ENCODE measurements at regions of chr18 and their contacts with region 1.

Region 1: GRCh38 chr18:67901573-67901972 is 385.1 kb upstream of the DSEL start:
- DNase-seq: no peak
- ATAC-seq: no peak
- H3K4me3 ChIP-seq: no peak overlapping the region
- H3K27ac ChIP-seq: no peak overlapping the region
- H3K4me1 ChIP-seq: no peaks in the 10 kb centered on the region
- H3K27me3 ChIP-seq: no peaks in the 10 kb centered on the region
- CTCF ChIP-seq: no peak

Region 2: GRCh38 chr18:66066191-66066590 is 1835.4 kb before region 1 on chr18:
- intact Hi-C with region 1: loop called in 1 of 2 experiments (anchors 10 kb)
- DNase-seq: no peak
- ATAC-seq: no peak
- H3K4me3 ChIP-seq: no peak overlapping the region
- H3K27ac ChIP-seq: no peak overlapping the region
- H3K4me1 ChIP-seq: no peaks in the 10 kb centered on the region
- H3K27me3 ChIP-seq: no peaks in the 10 kb centered on the region
- CTCF ChIP-seq: no peak

Region 3: GRCh38 chr18:67590571-67591141 is 310.9 kb before region 1 on chr18:
- intact Hi-C with region 1: no loop called
- DNase-seq: no peak
- ATAC-seq: no peak
- H3K4me3 ChIP-seq: no peak overlapping the region
- H3K27ac ChIP-seq: no peak overlapping the region
- H3K4me1 ChIP-seq: no peaks in the 10 kb centered on the region
- H3K27me3 ChIP-seq: no peaks in the 10 kb centered on the region
- CTCF ChIP-seq: no peak

Region 4: DNA sequence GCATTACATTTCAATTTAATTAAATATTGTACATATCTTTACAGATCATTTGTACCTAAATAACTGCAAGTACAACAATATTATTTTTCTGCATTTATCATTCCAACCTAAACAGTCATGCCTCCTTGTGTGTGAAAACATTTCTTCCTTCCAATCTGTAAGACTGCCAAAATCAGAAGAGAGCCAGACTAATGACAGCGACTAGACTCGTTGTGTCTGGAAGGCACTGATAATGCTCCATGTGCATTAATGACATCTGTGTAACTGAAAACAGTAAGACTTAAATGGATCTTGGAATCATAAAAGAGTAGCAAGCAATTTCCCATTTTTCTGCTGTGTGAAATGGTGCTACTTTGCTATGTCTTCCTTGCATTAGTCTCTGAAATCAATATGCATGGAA is 107.1 kb before region 1 on chr18:
- intact Hi-C with region 1: no loop called
- DNase-seq: no peak
- ATAC-seq: no peak
- H3K4me3 ChIP-seq: no peak overlapping the region
- H3K27ac ChIP-seq: no peak overlapping the region
- H3K4me1 ChIP-seq: no peaks in the 10 kb centered on the region
- H3K27me3 ChIP-seq: no peaks in the 10 kb centered on the region
- CTCF ChIP-seq: no peak

Region 5: DNA sequence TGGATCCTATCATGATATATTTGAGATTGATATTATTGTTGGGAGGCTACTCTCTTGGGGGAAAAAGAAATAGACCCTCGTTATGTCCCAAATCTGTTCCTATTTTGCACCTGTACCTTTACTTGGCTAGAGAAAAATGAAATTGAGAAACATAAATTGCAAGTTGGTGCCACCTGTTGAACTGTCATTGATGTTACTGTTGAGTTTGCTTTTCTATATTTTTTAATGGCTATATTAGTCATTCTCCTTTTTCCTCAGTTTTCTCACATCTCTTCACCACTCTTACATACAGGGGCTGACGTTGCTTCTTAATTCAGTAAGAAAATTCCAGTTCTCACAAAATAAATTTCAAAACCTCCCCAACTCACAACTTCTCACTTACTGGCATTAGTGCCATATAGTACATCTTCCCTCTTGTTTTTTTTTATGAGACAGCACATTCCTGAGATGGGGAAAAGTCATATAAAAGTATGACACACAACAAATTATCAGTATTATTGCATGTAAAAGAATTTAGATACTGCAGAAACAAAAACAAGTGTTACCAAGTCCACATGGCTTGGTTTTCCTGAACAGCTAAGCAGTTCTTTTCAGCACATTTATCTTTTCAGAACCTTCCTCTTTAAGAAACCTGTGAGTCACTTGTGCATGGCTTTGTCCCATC is 36.8 kb before region 1 on chr18:
- intact Hi-C with region 1: no loop called
- DNase-seq: no peak
- ATAC-seq: no peak
- H3K4me3 ChIP-seq: no peak overlapping the region
- H3K27ac ChIP-seq: no peak overlapping the region
- H3K4me1 ChIP-seq: no peaks in the 10 kb centered on the region
- H3K27me3 ChIP-seq: no peaks in the 10 kb centered on the region
- CTCF ChIP-seq: no peak